ENCODE measurements at regions of chr13 and their contacts with region 1.

Region 1: GRCh38 chr13:24605923-24606372 is 74.3 kb upstream of the ATP12A start:
- DNase-seq: no peak
- ATAC-seq: peak; percentile 79
- H3K4me3 ChIP-seq: no peak overlapping the region
- H3K27ac ChIP-seq: no peak overlapping the region
- H3K4me1 ChIP-seq: peaks cover 7% of the 10 kb centered on the region
- H3K27me3 ChIP-seq: no peaks in the 10 kb centered on the region
- CTCF ChIP-seq: peak in 2 of 3 experiments; percentile 23 to 29; a peak in 4 of 6 replicates
- EP300 ChIP-seq: no peak
- POLR2A ChIP-seq: no peak
- RAD21 ChIP-seq: peak; percentile 42

Region 2: DNA sequence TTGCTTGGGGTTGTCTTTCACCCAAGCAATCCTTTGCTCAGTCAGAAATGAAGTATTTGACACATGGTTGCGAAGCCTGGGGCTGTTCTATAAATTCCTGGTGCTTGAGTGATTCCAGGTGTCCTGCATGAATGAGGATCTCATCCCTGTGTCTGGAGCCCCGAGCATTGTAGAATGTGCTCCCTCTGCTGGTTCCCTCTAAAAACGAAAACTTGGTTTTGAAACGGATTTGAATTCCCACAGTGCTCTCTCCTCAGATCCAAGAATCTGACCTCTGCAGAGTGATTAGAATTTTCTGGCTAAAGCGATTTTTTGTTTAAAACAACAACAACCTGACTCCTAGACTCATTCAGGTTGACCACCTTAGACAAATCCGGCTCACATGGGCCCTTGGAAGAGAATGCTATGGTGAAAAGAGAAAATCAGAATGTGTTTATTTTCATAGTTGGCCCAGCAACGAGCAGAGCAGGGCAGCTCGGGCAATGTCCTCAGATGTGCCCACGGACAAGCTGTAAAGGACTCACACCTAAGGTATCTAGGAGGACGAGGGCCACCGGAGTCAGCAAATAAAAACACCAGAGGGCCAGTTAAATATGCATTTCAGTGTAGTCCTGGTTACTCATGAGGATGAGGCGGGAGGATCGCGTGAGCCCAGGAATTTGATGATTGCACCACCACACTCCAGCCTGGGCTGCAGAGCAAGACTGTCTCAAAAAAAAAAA is 65.6 kb after region 1 on chr13:
- CTCF ChIA-PET with region 1: interaction called, 14 read pairs
- POLR2A ChIA-PET with region 1: no interaction called
- RAD21 ChIA-PET with region 1: interaction called, 10 read pairs
- SMC1A ChIA-PET with region 1: interaction called, 7 read pairs
- in situ Hi-C with region 1: no loop called
- intact Hi-C with region 1: loop called (anchors 1 kb)
- DNase-seq: no peak
- ATAC-seq: peak; percentile 64
- H3K4me3 ChIP-seq: no peak overlapping the region
- H3K27ac ChIP-seq: no peak overlapping the region
- H3K4me1 ChIP-seq: no peaks in the 10 kb centered on the region
- H3K27me3 ChIP-seq: peaks cover 0 to 2% of the 10 kb centered on the region in 2 experiments; a peak in 2 of 4 replicates
- CTCF ChIP-seq: peak; percentile 50 to 66 (median 65)
- EP300 ChIP-seq: no peak
- POLR2A ChIP-seq: no peak
- RAD21 ChIP-seq: peak; percentile 62

Region 3: GRCh38 chr13:24683838-24684599 is 78.1 kb after region 1 on chr13:
- CTCF ChIA-PET with region 1: interaction called, 5 read pairs
- POLR2A ChIA-PET with region 1: no interaction called
- RAD21 ChIA-PET with region 1: interaction called, 5 read pairs
- SMC1A ChIA-PET with region 1: no interaction called
- in situ Hi-C with region 1: no loop called
- intact Hi-C with region 1: loop called (anchors 2 kb)
- DNase-seq: no peak
- ATAC-seq: peak; percentile 89
- H3K4me3 ChIP-seq: no peak overlapping the region
- H3K27ac ChIP-seq: no peak overlapping the region
- H3K4me1 ChIP-seq: peaks cover 23% of the 10 kb centered on the region
- H3K27me3 ChIP-seq: peaks cover 3 to 4% of the 10 kb centered on the region in 2 experiments
- CTCF ChIP-seq: peak; percentile 68 to 89 (median 82)
- EP300 ChIP-seq: no peak
- POLR2A ChIP-seq: no peak
- RAD21 ChIP-seq: peak; percentile 44